Activated CD4-positive, alpha-beta memory T cell treated with anti-CD3 and anti-CD28 coated beads, Interleukin-2, amount 10 ng/mL, durations not matched to agents 7 days and 5 days (primary cell): ENCODE measurements at regions of chr14 and their contacts with region 1.

Region 1: GRCh38 chr14:67426983-67427606 is 15.1 kb upstream of the PLEK2 start:
- DNase-seq: peak; percentile 76
- H3K4me3 Mint-ChIP-seq: no peak overlapping the region
- H3K27ac Mint-ChIP-seq: no peak overlapping the region
- H3K4me1 Mint-ChIP-seq: peaks cover 5% of the 10 kb centered on the region
- H3K27me3 Mint-ChIP-seq: peaks cover 37% of the 10 kb centered on the region

Region 2: GRCh38 chr14:67405771-67406170 is 21.3 kb before region 1 on chr14:
- CTCF ChIA-PET with region 1: no interaction called
- POLR2A ChIA-PET with region 1: no interaction called
- DNase-seq: no peak
- H3K4me3 Mint-ChIP-seq: no peak overlapping the region
- H3K27ac Mint-ChIP-seq: no peak overlapping the region
- H3K4me1 Mint-ChIP-seq: no peaks in the 10 kb centered on the region
- H3K27me3 Mint-ChIP-seq: peaks cover 2% of the 10 kb centered on the region

Region 3: DNA sequence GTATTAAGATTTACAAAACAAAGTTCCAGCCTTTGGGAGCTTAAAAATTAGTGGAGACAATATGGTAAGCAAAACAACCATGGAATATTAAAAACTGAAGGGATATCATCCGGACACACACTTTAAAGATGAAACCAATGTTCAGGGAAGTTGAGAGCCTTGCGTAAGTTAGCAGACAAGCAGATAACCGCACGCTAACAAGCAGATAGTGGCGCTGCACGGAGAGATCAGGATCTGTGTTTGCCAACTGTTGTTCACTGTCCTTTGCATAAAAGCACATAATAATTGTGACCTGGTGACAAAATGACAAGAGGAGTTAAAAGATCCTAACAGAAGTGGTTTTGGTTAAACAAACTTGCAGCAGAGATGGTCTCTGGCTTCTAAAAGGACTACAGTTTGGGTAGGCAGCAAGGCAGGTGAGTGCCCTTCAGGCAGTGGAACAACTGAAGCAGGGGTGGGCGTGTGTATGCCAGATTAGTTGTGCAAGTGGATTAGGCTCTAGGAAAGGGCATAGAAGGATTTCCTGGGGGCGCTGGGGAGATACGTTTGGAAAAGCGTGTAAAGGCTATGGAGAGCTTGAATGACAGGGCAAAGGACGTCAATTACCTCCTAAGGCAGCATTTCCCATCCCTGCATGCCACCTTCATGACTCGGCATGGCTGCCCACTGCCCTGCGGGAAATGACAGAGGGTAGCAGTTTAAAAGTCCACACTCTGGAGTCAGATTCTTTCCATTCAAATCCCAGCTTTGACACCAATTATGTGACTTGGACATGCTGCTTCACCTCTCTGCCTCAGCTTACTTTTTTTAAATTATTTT is 76.0 kb after region 1 on chr14:
- CTCF ChIA-PET with region 1: no interaction called
- POLR2A ChIA-PET with region 1: no interaction called
- DNase-seq: no peak
- H3K4me3 Mint-ChIP-seq: no peak overlapping the region
- H3K27ac Mint-ChIP-seq: no peak overlapping the region
- H3K4me1 Mint-ChIP-seq: peaks cover 1% of the 10 kb centered on the region
- H3K27me3 Mint-ChIP-seq: peaks cover 2% of the 10 kb centered on the region

Region 4: GRCh38 chr14:67526676-67527459 is 99.8 kb after region 1 on chr14:
- CTCF ChIA-PET with region 1: interaction called, 15 read pairs
- POLR2A ChIA-PET with region 1: no interaction called
- DNase-seq: peak; percentile 42
- H3K4me3 Mint-ChIP-seq: no peak overlapping the region
- H3K27ac Mint-ChIP-seq: no peak overlapping the region
- H3K4me1 Mint-ChIP-seq: no peaks in the 10 kb centered on the region
- H3K27me3 Mint-ChIP-seq: peaks cover 62% of the 10 kb centered on the region

Region 5: DNA sequence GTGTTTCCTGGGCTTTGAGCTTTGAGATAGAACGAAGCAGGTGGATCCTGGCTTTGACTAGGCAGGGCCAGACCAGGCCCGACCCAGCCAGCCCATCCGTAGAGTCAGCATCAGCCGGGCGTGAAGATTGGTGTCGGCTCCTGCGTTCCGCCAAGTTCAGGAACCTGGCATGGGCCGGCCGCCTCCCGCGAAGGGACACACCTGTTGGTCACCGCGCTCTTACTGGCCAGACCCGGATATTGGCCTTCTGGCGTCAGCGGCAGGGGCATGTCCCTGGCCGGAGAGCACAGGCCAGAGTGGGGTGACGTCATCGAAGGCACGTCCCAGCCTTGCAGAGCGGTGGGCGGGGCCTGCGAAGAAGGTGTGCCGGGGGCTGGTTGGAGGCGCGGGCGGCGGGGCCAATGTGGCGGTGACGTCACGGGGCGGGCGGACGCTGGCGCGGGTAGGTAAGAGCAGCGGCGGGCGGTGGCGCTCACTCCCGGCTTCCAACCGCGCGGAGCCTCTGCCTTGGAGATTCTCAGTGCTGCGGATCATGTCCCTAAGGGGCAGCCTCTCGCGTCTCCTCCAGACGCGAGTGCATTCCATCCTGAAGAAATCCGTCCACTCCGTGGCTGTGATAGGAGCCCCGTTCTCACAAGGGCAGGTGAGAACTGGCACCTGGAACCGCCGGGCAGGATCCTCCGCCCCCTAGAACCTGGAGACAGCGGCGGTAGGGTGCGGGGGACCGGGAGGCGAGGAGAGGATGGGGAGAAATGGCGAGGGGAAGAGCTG is 192.5 kb after region 1 on chr14 and contains the start of gene ARG2:
- CTCF ChIA-PET with region 1: interaction called, 12 read pairs
- POLR2A ChIA-PET with region 1: no interaction called
- DNase-seq: peak; percentile 96
- H3K4me3 Mint-ChIP-seq: peak within 1 kb of the TSS; percentile 78
- H3K27ac Mint-ChIP-seq: peak within 1 kb of the TSS; percentile 59
- H3K4me1 Mint-ChIP-seq: peaks cover 32% of the 10 kb centered on the region
- H3K27me3 Mint-ChIP-seq: peaks cover 17% of the 10 kb centered on the region
- total RNA-seq, gene ARG2: 6.8 to 7.7 TPM